Aorta (tissue), 5 donors: ENCODE measurements at regions of chr5 and their contacts with region 1.

Region 1: DNA sequence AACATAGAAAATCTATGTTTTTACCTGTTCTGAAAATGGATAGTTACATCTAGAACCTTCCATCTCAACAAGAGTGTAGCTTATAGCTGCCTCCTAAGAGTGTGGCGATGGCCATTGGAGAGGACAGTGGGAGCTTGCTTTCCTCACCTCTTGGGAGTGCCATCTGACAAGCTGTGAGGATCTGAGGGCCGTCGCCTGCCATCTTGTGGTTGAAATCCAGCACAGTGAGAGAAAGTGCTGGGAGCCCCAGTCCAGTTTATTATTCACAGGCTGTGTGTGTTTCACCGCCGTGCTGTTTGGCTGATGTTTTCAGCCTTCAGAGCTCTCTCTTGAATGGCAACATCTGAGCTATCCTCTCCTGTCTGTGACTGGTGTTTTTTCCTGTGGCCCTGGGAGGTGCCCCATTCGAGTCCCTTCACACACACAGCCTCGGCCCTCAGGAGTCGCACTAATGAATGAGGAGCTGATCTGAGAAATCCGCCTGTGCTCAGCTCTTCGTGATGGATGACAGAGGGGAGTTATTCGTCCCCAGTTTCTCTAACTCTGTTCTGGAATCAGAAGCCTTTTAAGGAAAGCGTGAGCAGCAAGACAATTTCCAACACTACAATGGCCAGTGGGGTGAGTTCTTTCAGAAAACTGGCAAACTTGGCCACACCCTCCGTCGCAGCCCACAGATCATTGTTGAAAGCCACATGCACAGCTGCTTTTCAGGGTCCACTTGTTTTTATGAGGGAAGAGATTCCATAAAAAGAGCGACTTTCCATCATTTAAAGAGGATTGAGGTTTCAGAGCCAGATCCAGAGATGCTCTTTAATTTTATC is 170.3 kb downstream of the PDZD2 start:
- DNase-seq: peak; percentile 65 to 84
- ATAC-seq: peak; percentile 89
- H3K4me3 ChIP-seq: no peak overlapping the region
- H3K27ac ChIP-seq: no peak overlapping the region
- H3K4me1 ChIP-seq: no peaks in the 10 kb centered on the region
- H3K27me3 ChIP-seq: no peaks in the 10 kb centered on the region

Region 2: DNA sequence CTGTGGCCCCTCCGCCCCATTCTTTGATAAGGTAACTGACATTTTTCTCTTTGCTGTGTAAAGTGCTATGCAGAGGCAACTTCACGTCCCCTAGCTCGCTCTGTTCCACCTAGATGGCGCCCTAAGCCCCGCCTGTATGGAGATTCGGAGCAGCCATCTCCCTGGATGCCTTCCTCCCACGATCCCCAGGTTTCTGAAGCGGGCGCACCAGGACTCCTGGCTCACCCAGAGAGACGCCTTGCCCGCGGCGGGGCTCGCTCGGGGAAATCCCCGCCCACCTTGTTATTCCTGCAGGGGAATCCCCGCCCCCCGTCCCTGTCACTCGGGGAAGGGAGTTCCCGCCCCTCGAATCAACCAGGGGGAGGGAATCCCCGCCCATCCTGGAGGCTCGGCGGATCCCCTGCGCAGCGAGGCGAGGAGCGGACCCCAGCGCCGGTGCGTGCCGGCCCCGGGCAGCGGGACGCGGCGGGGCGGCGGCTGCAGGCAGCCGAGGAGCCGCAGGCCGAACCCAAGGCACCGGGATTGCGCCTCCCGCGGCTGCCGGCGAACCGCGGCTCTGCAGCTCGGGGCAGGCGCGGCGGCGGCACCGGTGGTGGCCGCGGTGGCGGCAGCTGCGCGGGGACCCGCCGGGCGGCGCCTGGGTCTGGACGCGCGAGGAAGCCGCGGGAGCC is 170.4 kb before region 1 on chr5 and contains the start of gene PDZD2:
- intact Hi-C with region 1: loop called (anchors 5 kb)
- DNase-seq: peak; percentile 76 to 90
- ATAC-seq: peak; percentile 80
- H3K4me3 ChIP-seq: peak within 1 kb of the TSS; percentile 63 to 77
- H3K27ac ChIP-seq: peak within 1 kb of the TSS in 1 of 2 donors; percentile 4
- H3K4me1 ChIP-seq: no peaks in the 10 kb centered on the region
- H3K27me3 ChIP-seq: no peaks in the 10 kb centered on the region
- total RNA-seq, gene PDZD2: 7.8 to 18.0 TPM

Region 3: DNA sequence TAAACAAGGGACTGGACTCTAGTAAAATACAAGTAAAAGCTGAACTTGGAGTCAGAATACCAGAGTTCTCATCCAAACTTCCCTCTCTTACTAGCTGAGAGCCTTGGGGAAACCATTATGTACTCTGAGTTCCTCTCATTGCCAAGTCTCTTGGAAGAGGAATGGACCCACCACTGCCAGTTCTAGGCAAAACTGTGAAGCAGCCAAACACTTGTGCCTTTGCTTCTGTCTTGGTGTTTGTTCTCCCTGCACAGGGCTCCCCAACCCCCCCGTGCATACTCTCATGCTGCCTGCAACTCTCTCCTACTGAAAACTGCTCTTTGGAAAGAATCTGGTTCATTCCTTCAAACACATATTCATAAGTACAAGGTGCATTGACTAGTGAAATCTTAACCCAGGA is 67.8 kb before region 1 on chr5:
- intact Hi-C with region 1: no loop called
- DNase-seq: peak in 1 of 2 donors; percentile 54
- ATAC-seq: peak; percentile 86
- H3K4me3 ChIP-seq: no peak overlapping the region
- H3K27ac ChIP-seq: no peak overlapping the region
- H3K4me1 ChIP-seq: peaks cover 0 to 4% of the 10 kb centered on the region in 2 donors
- H3K27me3 ChIP-seq: no peaks in the 10 kb centered on the region